ENCODE measurements at regions of chr5 and their contacts with region 1.

Region 1: DNA sequence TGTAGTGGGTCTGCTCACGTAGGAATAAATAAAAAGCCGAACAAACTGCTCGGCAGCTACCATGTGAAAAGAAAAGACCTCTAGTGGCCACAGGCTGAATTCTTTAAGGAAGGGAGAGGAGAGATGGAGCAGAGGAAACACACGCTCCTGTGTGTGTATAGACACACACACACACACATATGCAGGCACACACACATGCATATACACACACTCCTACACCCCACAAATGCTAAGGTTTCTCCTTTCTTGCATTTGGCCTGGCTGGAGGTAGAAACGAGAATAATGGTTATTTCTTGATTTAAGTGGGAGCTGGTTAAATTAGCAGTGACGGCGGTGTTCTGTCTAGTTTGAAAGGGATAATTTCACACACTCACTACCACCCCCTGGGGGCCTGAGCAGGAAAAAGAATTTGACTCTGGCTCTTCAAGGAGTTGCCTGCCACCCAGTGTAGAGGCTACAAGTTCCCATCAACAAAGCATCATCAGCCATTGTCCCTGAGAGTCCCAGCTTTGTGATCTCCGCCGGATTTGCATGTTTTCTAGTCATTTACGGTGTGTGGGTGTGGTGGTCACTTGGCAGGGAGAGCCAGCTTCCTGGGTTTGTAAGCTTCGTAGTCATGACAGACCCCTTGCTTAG is at the start of gene INSYN2B:
- DNase-seq: peak; percentile 93
- H3K4me3 Mint-ChIP-seq: peak within 1 kb of the TSS; percentile 69
- H3K27ac Mint-ChIP-seq: no peak within 1 kb of the TSS
- H3K4me1 Mint-ChIP-seq: peaks cover 24% of the 10 kb centered on the region
- H3K27me3 Mint-ChIP-seq: no peaks in the 10 kb centered on the region
- CTCF ChIP-seq: peak; percentile 78
- total RNA-seq, gene INSYN2B: 0.19 and 0.49 TPM in 2 replicates

Region 2: DNA sequence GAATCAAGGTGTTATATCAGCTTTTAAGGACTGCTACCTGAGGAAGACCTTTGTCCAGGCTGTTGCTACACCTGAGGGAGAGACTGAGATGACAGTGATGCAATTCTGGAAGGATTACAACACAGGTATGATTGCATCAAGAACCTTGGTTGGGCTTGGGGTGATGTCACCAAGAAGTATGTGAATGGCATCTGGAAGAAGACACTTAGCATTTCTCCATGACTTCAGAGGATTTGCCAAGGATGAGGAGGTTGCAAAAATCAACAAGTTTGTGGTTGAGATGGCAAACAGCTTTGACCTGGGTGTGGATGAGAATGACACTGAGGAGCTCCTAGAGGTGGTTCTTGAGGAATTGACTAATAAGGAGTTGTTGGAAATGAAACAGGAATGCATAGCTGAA is 1333.5 kb before region 1 on chr5:
- CTCF ChIA-PET with region 1: no interaction called
- POLR2A ChIA-PET with region 1: no interaction called
- intact Hi-C with region 1: no loop called
- DNase-seq: peak; percentile 99
- H3K4me3 Mint-ChIP-seq: peak overlapping the region; percentile 25
- H3K27ac Mint-ChIP-seq: peak overlapping the region; percentile 93
- H3K4me1 Mint-ChIP-seq: peaks cover 44% of the 10 kb centered on the region
- H3K27me3 Mint-ChIP-seq: no peaks in the 10 kb centered on the region
- CTCF ChIP-seq: no peak

Region 3: DNA sequence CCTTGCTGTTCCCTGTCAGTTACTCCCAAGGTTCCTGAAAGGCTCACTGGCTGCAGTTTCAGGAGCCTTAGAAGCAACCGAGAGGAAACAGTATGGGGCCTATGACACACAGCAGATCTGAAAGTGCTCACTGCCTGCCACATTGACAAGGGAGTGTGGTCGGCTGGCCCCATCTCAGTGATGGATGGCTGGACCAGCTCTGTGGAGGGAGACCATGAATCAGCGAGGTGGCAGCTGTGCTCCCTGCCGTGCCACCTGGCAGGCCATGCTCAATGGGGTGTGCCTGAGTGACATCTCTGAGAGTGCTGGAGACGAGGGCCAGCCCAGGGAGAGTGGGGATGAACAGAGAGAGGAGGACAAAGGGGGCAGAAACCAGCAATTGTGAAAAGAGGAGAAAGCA is 294.4 kb before region 1 on chr5:
- CTCF ChIA-PET with region 1: interaction called, 13 read pairs
- POLR2A ChIA-PET with region 1: no interaction called
- intact Hi-C with region 1: no loop called
- DNase-seq: no peak
- H3K4me3 Mint-ChIP-seq: no peak overlapping the region
- H3K27ac Mint-ChIP-seq: no peak overlapping the region
- H3K4me1 Mint-ChIP-seq: no peaks in the 10 kb centered on the region
- H3K27me3 Mint-ChIP-seq: no peaks in the 10 kb centered on the region
- CTCF ChIP-seq: no peak

Region 4: GRCh38 chr5:169710675-169711074 is 269.9 kb before region 1 on chr5:
- CTCF ChIA-PET with region 1: interaction called, 15 read pairs
- POLR2A ChIA-PET with region 1: interaction called, 4 read pairs
- intact Hi-C with region 1: no loop called
- DNase-seq: no peak
- H3K4me3 Mint-ChIP-seq: no peak overlapping the region
- H3K27ac Mint-ChIP-seq: no peak overlapping the region
- H3K4me1 Mint-ChIP-seq: peaks cover 17% of the 10 kb centered on the region
- H3K27me3 Mint-ChIP-seq: no peaks in the 10 kb centered on the region
- CTCF ChIP-seq: no peak

Region 5: GRCh38 chr5:169795338-169795737 is 185.2 kb before region 1 on chr5:
- CTCF ChIA-PET with region 1: interaction called, 17 read pairs
- POLR2A ChIA-PET with region 1: no interaction called
- intact Hi-C with region 1: loop called (anchors 5 kb)
- DNase-seq: peak; percentile 58
- H3K4me3 Mint-ChIP-seq: no peak overlapping the region
- H3K27ac Mint-ChIP-seq: no peak overlapping the region
- H3K4me1 Mint-ChIP-seq: no peaks in the 10 kb centered on the region
- H3K27me3 Mint-ChIP-seq: no peaks in the 10 kb centered on the region
- CTCF ChIP-seq: no peak

Region 6: GRCh38 chr5:169906745-169907649 is 73.5 kb before region 1 on chr5:
- CTCF ChIA-PET with region 1: interaction called, 20 read pairs
- POLR2A ChIA-PET with region 1: no interaction called
- intact Hi-C with region 1: loop called (anchors 1 kb)
- DNase-seq: no peak
- H3K4me3 Mint-ChIP-seq: no peak overlapping the region
- H3K27ac Mint-ChIP-seq: no peak overlapping the region
- H3K4me1 Mint-ChIP-seq: no peaks in the 10 kb centered on the region
- H3K27me3 Mint-ChIP-seq: no peaks in the 10 kb centered on the region
- CTCF ChIP-seq: no peak

Region 7: DNA sequence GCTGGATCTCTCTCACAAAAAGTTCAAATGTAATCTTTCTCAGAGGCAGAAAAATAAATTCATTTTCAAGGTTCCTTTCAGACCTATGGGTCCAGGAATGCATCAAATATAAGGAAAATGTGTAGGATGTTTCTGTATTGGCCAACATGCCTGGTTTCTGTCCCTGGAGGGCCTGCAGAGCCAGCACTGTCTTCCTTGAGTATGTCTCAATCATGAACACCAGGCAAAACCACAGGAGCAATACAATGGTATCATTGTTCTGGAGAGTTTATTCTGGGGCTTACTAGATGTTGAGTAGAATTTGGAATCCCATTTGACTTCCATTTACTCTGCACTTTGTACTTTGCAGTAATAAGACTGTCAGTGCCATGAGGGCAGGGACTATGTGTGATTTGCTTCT is 23.8 kb before region 1 on chr5:
- CTCF ChIA-PET with region 1: interaction called, 12 read pairs
- POLR2A ChIA-PET with region 1: no interaction called
- intact Hi-C with region 1: no loop called
- DNase-seq: peak; percentile 29
- H3K4me3 Mint-ChIP-seq: no peak overlapping the region
- H3K27ac Mint-ChIP-seq: no peak overlapping the region
- H3K4me1 Mint-ChIP-seq: peaks cover 5% of the 10 kb centered on the region
- H3K27me3 Mint-ChIP-seq: no peaks in the 10 kb centered on the region
- CTCF ChIP-seq: no peak

Region 8: DNA sequence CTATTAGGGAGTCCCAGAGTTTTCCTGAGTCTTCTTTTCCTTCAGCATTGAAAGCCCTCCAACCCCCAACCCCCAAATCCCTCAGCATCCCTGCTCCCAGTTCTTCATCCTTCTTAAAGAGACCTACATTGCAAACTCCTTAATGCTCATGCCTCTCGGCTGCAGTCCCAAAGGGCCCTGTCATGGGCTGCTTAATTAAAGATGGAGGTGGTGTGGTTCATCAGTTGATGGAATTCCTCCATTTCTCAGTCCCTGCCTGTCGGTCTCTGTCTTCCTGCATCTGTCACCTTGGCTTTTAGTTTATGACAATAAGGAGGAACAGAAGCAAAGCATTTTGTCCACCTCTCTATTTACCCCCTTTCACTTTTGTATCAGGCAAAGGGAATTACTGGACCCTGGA is 127.1 kb after region 1 on chr5:
- CTCF ChIA-PET with region 1: no interaction called
- POLR2A ChIA-PET with region 1: no interaction called
- intact Hi-C with region 1: no loop called
- DNase-seq: no peak
- H3K4me3 Mint-ChIP-seq: no peak overlapping the region
- H3K27ac Mint-ChIP-seq: no peak overlapping the region
- H3K4me1 Mint-ChIP-seq: peaks cover 6% of the 10 kb centered on the region
- H3K27me3 Mint-ChIP-seq: no peaks in the 10 kb centered on the region
- CTCF ChIP-seq: no peak

Region 9: GRCh38 chr5:170216266-170216864 is 235.8 kb after region 1 on chr5:
- CTCF ChIA-PET with region 1: interaction called, 8 read pairs
- POLR2A ChIA-PET with region 1: no interaction called
- intact Hi-C with region 1: loop called (anchors 1 kb)
- DNase-seq: peak; percentile 68
- H3K4me3 Mint-ChIP-seq: no peak overlapping the region
- H3K27ac Mint-ChIP-seq: no peak overlapping the region
- H3K4me1 Mint-ChIP-seq: peaks cover 6% of the 10 kb centered on the region
- H3K27me3 Mint-ChIP-seq: no peaks in the 10 kb centered on the region
- CTCF ChIP-seq: peak; percentile 76

Measured in MCF 10A (cell line).